MCF 10A (cell line): ENCODE measurements at regions of chr5 and their contacts with region 1.

Region 1: GRCh38 chr5:77518304-77518703 is 26.2 kb upstream of the WDR41 start:
- DNase-seq: peak; percentile 42
- H3K4me3 Mint-ChIP-seq: no peak overlapping the region
- H3K27ac Mint-ChIP-seq: no peak overlapping the region
- H3K4me1 Mint-ChIP-seq: no peaks in the 10 kb centered on the region
- H3K27me3 Mint-ChIP-seq: peaks cover 17% of the 10 kb centered on the region
- CTCF ChIP-seq: peak; percentile 25

Region 2: DNA sequence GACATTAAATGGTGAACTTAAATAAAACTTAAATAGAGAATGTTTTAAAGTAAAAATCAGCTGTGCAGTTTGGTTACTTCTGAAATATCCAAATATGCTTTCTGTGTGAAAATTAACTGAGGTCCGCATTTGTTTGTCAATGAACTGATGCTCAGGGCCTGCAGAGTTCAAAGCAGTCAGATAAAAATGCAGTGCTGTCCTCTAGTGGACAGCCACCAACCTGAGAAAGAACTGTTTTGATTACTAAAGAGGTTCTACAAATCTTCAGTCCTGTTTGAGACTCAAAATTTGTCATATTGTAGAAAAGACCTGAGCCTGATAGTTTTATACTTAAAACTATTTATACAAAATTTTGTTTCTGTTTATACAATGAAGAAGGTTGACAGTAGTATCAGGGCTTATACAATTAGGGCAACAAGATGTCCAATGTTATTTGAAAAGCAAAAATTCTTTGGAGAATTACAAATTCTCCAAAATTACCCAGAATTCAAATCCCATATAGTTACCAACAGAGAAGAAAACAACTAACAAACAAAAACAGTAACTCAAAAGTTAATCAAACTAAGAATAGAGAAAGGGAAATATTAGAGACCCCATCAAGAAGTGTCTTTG is 490.2 kb after region 1 on chr5:
- CTCF ChIA-PET with region 1: no interaction called
- POLR2A ChIA-PET with region 1: no interaction called
- intact Hi-C with region 1: loop called (anchors 5 kb)
- DNase-seq: peak; percentile 54
- H3K4me3 Mint-ChIP-seq: no peak overlapping the region
- H3K27ac Mint-ChIP-seq: no peak overlapping the region
- H3K4me1 Mint-ChIP-seq: no peaks in the 10 kb centered on the region
- H3K27me3 Mint-ChIP-seq: no peaks in the 10 kb centered on the region
- CTCF ChIP-seq: peak; percentile 83

Region 3: DNA sequence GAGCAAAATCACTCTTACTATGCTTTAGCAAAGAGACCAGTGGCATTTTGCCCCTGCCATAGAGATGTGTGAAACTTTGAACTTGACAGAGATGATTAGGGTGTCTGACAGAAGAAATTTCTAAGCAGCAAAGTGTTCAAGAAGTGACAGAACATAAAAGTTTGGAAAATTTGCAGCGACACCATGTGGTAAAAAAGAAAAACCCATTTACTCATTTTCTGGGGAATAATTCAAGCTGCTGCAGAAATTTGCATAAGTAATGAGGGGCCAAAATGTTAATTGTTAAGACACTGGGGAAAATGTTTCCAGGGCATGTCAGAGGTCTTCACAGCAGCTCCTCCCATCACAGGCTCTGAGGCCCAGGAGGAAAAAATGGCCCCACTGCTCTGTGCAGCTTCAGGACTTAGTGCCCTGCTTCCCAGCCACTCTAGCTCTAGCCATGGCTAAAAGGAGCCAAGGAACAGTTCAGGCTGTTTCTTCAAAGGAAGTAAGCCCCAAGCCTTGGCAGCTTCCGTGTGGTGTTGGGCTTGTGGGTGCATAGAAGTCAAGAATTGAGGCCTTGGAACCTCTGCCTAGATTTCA is 782.3 kb after region 1 on chr5:
- CTCF ChIA-PET with region 1: no interaction called
- POLR2A ChIA-PET with region 1: no interaction called
- intact Hi-C with region 1: loop called (anchors 2 kb)
- DNase-seq: peak; percentile 38
- H3K4me3 Mint-ChIP-seq: no peak overlapping the region
- H3K27ac Mint-ChIP-seq: no peak overlapping the region
- H3K4me1 Mint-ChIP-seq: peaks cover 5% of the 10 kb centered on the region
- H3K27me3 Mint-ChIP-seq: no peaks in the 10 kb centered on the region
- CTCF ChIP-seq: peak; percentile 31